Left cardiac atrium (tissue), 4 donors: ENCODE measurements at regions of chr7 and their contacts with region 1.

Region 1: DNA sequence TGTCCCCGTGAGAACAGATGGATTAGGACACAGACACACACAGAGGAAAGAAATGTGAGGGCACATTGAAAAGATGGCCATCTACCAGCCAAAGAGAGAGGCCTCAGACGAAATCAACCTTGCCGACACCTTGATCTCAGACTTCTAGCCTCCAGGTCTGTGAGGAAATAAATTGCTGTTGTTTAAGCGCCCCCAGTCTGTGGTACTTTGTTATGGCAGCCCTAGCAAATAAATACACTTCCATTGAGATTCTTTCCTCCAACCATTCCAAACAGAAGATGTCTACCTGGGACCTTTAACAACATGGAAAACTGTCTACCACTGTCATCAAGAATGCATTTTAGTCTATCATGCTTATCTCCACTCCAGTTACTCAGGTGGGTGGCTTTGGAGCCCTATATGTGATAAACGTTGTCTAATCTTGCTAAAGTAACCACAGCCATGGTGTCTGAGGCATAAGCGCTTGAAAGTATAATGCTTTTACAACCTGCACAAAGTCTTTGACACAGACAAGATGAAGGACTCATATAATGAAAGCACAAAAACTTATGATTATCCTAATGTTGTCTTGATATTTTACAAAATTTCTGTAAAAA is 244.3 kb downstream of the MTERF1 start:
- DNase-seq: no peak
- ATAC-seq: peak; percentile 38 to 47

Region 2: GRCh38 chr7:91089382-91089963 is 546.8 kb before region 1 on chr7:
- intact Hi-C with region 1: loop called in 1 of 2 experiments (anchors 2 kb)
- DNase-seq: no peak
- ATAC-seq: peak; percentile 39 to 41

Region 3: DNA sequence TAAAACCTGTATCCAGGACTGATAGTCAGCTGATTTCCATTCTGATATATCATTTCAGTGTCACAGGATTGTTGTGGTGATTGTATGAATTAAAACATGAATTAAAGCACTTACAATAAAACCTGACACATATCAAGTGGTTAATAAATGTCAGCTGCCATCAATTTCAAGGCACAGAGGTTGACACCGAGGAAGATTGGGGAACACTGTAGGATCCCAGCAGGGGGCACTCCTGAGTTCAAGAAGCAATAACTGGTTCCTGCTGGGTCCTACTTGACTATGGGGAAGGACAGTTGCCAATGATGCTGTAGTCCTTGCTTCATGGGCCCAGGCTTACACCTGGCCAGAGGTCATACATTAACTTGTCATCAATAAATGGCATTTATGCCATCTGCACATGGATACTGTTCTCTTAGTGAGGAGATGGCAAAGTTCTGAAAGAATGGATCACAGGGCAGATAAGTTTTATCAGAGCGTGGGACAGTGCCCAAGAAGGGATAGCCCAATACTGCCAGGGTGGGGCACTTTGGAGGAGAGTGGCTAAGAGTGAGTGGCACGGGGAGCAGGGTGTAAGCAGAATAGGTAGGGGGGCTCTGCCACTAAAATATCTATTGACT is 347.9 kb before region 1 on chr7:
- intact Hi-C with region 1: loop called in 1 of 2 experiments (anchors 10 kb)
- DNase-seq: peak; percentile 54
- ATAC-seq: peak; percentile 47 to 67

Region 4: DNA sequence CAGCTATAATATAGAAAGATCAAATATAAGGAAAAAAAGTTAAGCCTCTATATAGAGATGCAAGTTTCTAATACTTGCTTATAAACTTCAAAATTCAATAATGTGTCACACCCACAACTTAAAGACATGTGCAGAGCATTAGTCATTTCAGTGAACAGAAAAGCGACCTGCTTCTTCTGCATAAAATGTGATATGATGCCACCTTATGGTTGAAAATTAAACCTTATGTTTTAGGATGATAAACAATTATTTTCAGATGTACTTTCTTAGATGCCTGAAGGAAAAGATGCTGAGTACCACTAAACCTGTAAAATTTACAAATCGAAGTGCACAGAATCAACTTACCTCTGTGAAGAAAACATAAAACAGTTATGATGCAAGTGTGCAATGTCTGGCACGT is 148.2 kb after region 1 on chr7:
- intact Hi-C with region 1: loop called in 1 of 2 experiments (anchors 5 kb)
- DNase-seq: no peak
- ATAC-seq: peak in 1 of 2 donors; percentile 30

Region 5: GRCh38 chr7:91940572-91941341 is 304.5 kb after region 1 on chr7 and contains the start of gene AKAP9:
- intact Hi-C with region 1: no loop called
- DNase-seq: peak; percentile 94
- ATAC-seq: peak; percentile 94 to 98
- total RNA-seq, gene AKAP9: 27.3 to 37.4 TPM